ENCODE measurements at regions of chr4 and their contacts with region 1.

Region 1: GRCh38 chr4:56301181-56302076 is 85.9 kb downstream of the AASDH start:
- DNase-seq: peak; percentile 59
- ATAC-seq: peak; percentile 94 to 98

Region 2: GRCh38 chr4:55948726-55949474 is 352.5 kb before region 1 on chr4 and contains the start of gene CEP135:
- intact Hi-C with region 1: loop called (anchors 2 to 5 kb)
- DNase-seq: peak; percentile 96
- ATAC-seq: peak; percentile 96 to 99
- total RNA-seq, gene CEP135: 2.8 to 3.2 TPM